ENCODE measurements at regions of chr10 and their contacts with region 1.

Region 1: DNA sequence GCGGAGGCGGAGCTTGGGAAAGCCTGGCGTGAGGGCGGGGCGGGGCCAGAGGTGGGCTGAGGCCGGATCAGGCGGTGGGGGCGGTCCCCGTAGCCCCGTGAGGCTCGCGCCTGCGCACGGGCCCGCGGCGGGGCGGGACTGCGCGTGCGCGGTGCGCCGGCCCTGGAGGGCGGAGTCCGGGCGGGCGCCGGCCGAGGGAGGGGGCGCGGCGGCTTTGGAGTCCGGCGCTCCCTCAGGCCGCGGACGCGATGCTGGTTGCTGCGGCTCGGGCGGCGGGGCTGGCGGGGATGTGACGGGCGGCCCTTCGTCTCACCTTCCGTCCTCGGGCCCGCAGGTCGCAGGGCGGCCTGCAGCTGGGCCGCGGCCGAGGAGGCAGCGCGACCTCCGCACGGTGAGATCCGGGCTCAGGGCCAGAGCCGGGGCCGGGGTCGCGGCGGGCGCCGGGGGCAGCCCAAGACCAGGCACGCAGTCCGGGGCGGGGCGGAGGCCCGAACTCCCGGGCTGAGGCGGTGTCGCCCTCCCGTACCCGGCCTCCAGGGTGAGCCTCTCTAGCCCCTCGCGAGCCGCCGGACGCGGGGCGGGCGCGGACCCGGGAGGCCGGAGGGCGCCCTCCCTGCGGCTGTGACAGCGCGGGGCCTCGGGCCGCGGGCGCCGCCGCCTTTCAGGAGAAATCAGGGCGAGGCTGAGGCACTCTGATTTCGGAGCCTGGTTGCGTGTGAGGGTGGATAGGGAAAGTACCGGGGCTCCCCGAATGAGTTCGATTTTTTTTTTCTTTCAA is at the start of gene CCSER2:
- DNase-seq: peak; percentile 95 to 99
- ATAC-seq: peak; percentile 77 to 88 (median 77)
- H3K4me3 ChIP-seq: peak within 1 kb of the TSS; percentile 61
- H3K4me3 Mint-ChIP-seq: peak within 1 kb of the TSS; percentile 98
- H3K27ac ChIP-seq: peak within 1 kb of the TSS; percentile 96
- H3K27ac Mint-ChIP-seq: peak within 1 kb of the TSS; percentile 92 to 100
- H3K4me1 ChIP-seq: peaks cover 26% of the 10 kb centered on the region
- H3K4me1 Mint-ChIP-seq: peaks cover 36 to 39% of the 10 kb centered on the region in 2 donors
- H3K27me3 ChIP-seq: no peaks in the 10 kb centered on the region
- H3K27me3 Mint-ChIP-seq: no peaks in the 10 kb centered on the region
- CTCF ChIP-seq: no peak
- total RNA-seq, gene CCSER2: 125 to 158 (median 146) TPM

Region 2: GRCh38 chr10:84139126-84140035 is 189.2 kb before region 1 on chr10 and contains the start of gene GHITM:
- intact Hi-C with region 1: loop called (anchors 1 kb)
- DNase-seq: peak; percentile 99 to 100
- ATAC-seq: peak; percentile 91 to 98 (median 93)
- H3K4me3 ChIP-seq: peak within 1 kb of the TSS; percentile 81
- H3K4me3 Mint-ChIP-seq: peak within 1 kb of the TSS; percentile 95
- H3K27ac ChIP-seq: peak within 1 kb of the TSS; percentile 94
- H3K27ac Mint-ChIP-seq: peak within 1 kb of the TSS; percentile 98
- H3K4me1 ChIP-seq: peaks cover 13% of the 10 kb centered on the region
- H3K4me1 Mint-ChIP-seq: peaks cover 31 to 32% of the 10 kb centered on the region in 2 donors
- H3K27me3 ChIP-seq: no peaks in the 10 kb centered on the region
- H3K27me3 Mint-ChIP-seq: peaks cover 14 to 16% of the 10 kb centered on the region in 2 donors
- CTCF ChIP-seq: peak; percentile 37
- total RNA-seq, gene GHITM: 84.3 to 89.3 (median 87.9) TPM

Region 3: GRCh38 chr10:84342584-84342983 is 14.0 kb after region 1 on chr10:
- intact Hi-C with region 1: loop called (anchors 1 kb)
- DNase-seq: no peak
- ATAC-seq: peak; percentile 56 to 61 (median 58)
- H3K4me3 ChIP-seq: no peak overlapping the region
- H3K4me3 Mint-ChIP-seq: peak overlapping the region; percentile 69
- H3K27ac ChIP-seq: peak overlapping the region; percentile 27
- H3K27ac Mint-ChIP-seq: peak overlapping the region; percentile 79 to 89
- H3K4me1 ChIP-seq: peaks cover 26% of the 10 kb centered on the region
- H3K4me1 Mint-ChIP-seq: peaks cover 58 to 59% of the 10 kb centered on the region in 2 donors
- H3K27me3 ChIP-seq: no peaks in the 10 kb centered on the region
- H3K27me3 Mint-ChIP-seq: no peaks in the 10 kb centered on the region
- CTCF ChIP-seq: no peak